T-cell (primary cell): ENCODE measurements at regions of chr17 and their contacts with region 1.

Region 1: GRCh38 chr17:17641621-17642409 is 39.4 kb upstream of the RAI1 start:
- DNase-seq: peak; percentile 45 to 91 (median 74)
- ATAC-seq: peak; percentile 85 to 90 (median 88)
- H3K4me3 ChIP-seq: no peak overlapping the region
- H3K4me3 Mint-ChIP-seq: no peak overlapping the region
- H3K27ac ChIP-seq: no peak overlapping the region
- H3K27ac Mint-ChIP-seq: no peak overlapping the region
- H3K4me1 ChIP-seq: peaks cover 0 to 7% of the 10 kb centered on the region in 2 experiments
- H3K4me1 Mint-ChIP-seq: peaks cover 0 to 4% (median 0%) of the 10 kb centered on the region in 3 donors
- H3K27me3 ChIP-seq: peaks cover 0 to 17% of the 10 kb centered on the region in 2 experiments
- H3K27me3 Mint-ChIP-seq: peaks cover 0 to 4% of the 10 kb centered on the region in 2 donors

Region 2: DNA sequence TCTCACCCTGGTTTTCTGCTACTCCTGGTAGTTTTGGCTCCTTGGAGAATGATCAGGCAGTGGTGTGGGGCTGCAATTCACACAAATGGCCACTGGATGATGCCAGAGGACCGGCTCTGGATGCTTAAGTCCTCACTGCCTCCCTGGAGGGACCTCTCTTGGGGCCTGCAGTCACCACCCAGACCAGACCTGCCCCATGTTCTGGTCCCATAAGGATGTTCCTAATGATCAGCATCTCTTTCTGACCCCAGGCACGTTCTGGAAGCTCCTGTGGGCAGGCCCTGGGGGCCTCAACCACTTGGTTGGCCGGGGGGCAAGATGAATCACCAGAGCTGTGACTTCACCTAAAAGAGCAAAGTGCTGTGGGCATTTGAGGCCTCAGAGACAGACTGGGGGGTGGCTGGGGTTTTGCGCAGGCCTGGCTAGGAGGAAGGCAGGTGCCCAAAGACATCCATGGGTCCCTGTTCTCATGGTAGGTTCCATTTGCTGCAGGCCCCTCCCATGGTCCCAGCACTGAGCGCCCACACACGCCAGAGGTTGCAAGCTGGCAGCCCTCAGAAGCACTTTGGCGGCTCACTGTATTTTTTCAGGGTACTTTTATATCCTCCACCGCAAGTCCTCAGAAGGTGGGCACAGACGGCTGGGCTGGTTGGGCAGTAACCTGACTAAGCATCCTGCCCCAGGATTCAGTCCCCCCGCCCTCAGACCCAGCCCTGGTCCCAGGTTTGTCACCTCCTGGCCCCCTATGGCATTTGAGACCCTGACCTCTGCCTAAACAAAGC is 285.5 kb before region 1 on chr17:
- CTCF ChIA-PET with region 1: interaction called, 8 to 15 read pairs
- POLR2A ChIA-PET with region 1: interaction called in 1 of 2 experiments, 3 read pairs
- DNase-seq: peak; percentile 34 to 84 (median 59)
- ATAC-seq: peak; percentile 78 to 81 (median 79)
- H3K4me3 ChIP-seq: no peak overlapping the region
- H3K4me3 Mint-ChIP-seq: no peak overlapping the region
- H3K27ac ChIP-seq: no peak overlapping the region
- H3K27ac Mint-ChIP-seq: no peak overlapping the region
- H3K4me1 ChIP-seq: peaks cover 0 to 11% of the 10 kb centered on the region in 2 experiments
- H3K4me1 Mint-ChIP-seq: peaks cover 0 to 2% (median 0%) of the 10 kb centered on the region in 3 donors
- H3K27me3 ChIP-seq: peaks cover 0 to 17% of the 10 kb centered on the region in 2 experiments
- H3K27me3 Mint-ChIP-seq: peaks cover 0 to 4% of the 10 kb centered on the region in 2 donors

Region 3: GRCh38 chr17:17496189-17497064 is 145.4 kb before region 1 on chr17 and contains the start of gene RASD1:
- CTCF ChIA-PET with region 1: interaction called in 1 of 2 experiments, 18 read pairs
- POLR2A ChIA-PET with region 1: no interaction called
- DNase-seq: peak; percentile 43 to 88 (median 65)
- ATAC-seq: peak; percentile 86 to 89 (median 88)
- H3K4me3 ChIP-seq: peak within 1 kb of the TSS; percentile 62 to 71
- H3K4me3 Mint-ChIP-seq: peak within 1 kb of the TSS; percentile 76 to 85 (median 80)
- H3K27ac ChIP-seq: no peak within 1 kb of the TSS
- H3K27ac Mint-ChIP-seq: peak within 1 kb of the TSS in 1 of 2 donors; percentile 16
- H3K4me1 ChIP-seq: peaks cover 0 to 28% of the 10 kb centered on the region in 2 experiments
- H3K4me1 Mint-ChIP-seq: peaks cover 6 to 16% (median 12%) of the 10 kb centered on the region in 3 donors
- H3K27me3 ChIP-seq: peaks cover 0 to 52% of the 10 kb centered on the region in 2 experiments
- H3K27me3 Mint-ChIP-seq: peaks cover 5 to 7% of the 10 kb centered on the region in 2 donors
- total RNA-seq, gene RASD1: 0.70 to 2.9 (median 2.0) TPM